ENCODE measurements at regions of chr15 and their contacts with region 1.

Region 1: DNA sequence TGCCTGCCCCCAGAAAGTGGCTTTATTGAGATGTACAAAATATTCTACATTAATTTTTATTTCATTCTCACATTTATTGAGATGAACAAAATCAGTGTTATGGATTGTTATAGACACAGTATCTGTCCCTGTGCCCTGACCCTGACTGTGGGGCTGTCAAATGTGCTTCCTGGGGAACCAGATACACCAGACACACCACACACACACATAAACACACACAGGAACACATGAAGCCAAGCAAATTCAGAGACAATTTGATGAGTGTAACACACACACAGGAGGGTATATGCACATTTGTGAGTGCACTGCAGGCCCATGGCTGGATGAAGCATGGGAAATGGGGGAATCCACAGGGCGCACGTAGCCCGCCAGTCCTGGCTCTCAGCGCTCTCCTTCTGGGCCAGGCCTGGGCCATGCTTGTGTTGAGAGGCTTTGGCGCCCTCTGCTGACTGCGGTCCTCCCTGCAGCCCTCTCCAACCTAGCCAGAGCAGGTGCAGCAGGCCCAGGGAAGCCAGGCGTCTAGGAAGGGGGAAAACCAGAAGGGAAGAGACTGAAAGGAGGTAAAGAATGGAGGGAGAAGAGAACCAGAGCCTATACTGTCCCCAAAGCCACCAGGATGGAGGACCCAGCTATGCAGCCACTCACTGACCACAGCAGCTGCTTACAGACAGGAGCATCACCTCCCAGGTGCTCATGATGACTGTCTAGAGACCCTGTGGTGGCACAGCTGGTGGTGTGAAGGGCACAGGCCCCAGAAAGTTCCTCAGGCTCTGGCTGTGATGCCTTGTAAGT is 18.0 kb upstream of the LOXL1 start:
- H3K4me3 Mint-ChIP-seq: no peak overlapping the region
- H3K27ac Mint-ChIP-seq: no peak overlapping the region
- H3K4me1 Mint-ChIP-seq: peaks cover 16% of the 10 kb centered on the region
- H3K27me3 Mint-ChIP-seq: peaks cover 8% of the 10 kb centered on the region

Region 2: GRCh38 chr15:73284090-73284716 is 624.0 kb before region 1 on chr15:
- intact Hi-C with region 1: loop called (anchors 10 kb)
- H3K4me3 Mint-ChIP-seq: no peak overlapping the region
- H3K27ac Mint-ChIP-seq: no peak overlapping the region
- H3K4me1 Mint-ChIP-seq: peaks cover 33% of the 10 kb centered on the region
- H3K27me3 Mint-ChIP-seq: peaks cover 18% of the 10 kb centered on the region

Region 3: DNA sequence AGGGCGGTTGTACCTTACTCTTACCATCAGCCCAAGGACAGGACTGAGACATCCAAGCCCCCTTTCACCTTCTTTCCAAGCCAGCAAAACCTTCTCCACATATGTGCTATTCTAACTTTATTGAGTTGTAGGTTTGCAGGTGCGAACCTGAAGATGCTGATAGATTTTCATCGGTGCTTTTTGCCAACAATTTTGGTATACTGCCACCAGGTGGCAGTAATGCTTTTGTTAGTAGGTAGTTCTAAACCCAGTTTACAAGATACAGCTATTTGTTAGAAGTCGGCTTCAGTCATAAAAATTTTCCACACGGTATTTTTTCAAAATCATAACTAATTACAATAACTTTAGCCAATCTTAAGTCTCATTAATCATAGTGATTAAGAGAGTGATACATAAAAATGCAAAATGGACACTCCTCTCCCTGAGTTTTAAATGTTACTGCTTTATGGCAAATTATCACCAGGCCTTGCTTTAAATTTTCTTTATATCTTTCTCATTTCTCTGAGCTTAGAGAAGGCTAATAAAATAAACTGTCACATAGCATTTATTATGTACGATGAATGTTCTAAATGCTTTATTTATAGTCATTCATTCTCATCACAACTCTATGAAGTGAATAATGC is 34.2 kb before region 1 on chr15:
- intact Hi-C with region 1: loop called (anchors 2 kb)
- H3K4me3 Mint-ChIP-seq: no peak overlapping the region
- H3K27ac Mint-ChIP-seq: no peak overlapping the region
- H3K4me1 Mint-ChIP-seq: peaks cover 5% of the 10 kb centered on the region
- H3K27me3 Mint-ChIP-seq: peaks cover 31% of the 10 kb centered on the region

Region 4: GRCh38 chr15:73972984-73973682 is 64.9 kb after region 1 on chr15:
- intact Hi-C with region 1: no loop called
- H3K4me3 Mint-ChIP-seq: peak overlapping the region; percentile 52
- H3K27ac Mint-ChIP-seq: no peak overlapping the region
- H3K4me1 Mint-ChIP-seq: peaks cover 23% of the 10 kb centered on the region
- H3K27me3 Mint-ChIP-seq: peaks cover 17% of the 10 kb centered on the region

Region 5: GRCh38 chr15:74433592-74434262 is 525.5 kb after region 1 on chr15 and contains the start of gene SEMA7A:
- intact Hi-C with region 1: no loop called
- H3K4me3 Mint-ChIP-seq: peak within 1 kb of the TSS; percentile 82
- H3K27ac Mint-ChIP-seq: peak within 1 kb of the TSS; percentile 83
- H3K4me1 Mint-ChIP-seq: peaks cover 66% of the 10 kb centered on the region
- H3K27me3 Mint-ChIP-seq: peaks cover 31% of the 10 kb centered on the region